Endothelial cell of umbilical vein (primary cell): ENCODE measurements at regions of chr19 and their contacts with region 1.

Region 1: GRCh38 chr19:2455851-2456570 is 748 bp downstream of the LMNB2 start:
- DNase-seq: no peak
- H3K4me3 ChIP-seq: peak overlapping the region; percentile 69 to 100 (median 80)
- H3K27ac ChIP-seq: peak overlapping the region; percentile 68
- H3K4me1 ChIP-seq: peaks cover 13% of the 10 kb centered on the region
- H3K27me3 ChIP-seq: no peaks in the 10 kb centered on the region
- CTCF ChIP-seq: no peak
- POLR2A ChIP-seq: no peak

Region 2: DNA sequence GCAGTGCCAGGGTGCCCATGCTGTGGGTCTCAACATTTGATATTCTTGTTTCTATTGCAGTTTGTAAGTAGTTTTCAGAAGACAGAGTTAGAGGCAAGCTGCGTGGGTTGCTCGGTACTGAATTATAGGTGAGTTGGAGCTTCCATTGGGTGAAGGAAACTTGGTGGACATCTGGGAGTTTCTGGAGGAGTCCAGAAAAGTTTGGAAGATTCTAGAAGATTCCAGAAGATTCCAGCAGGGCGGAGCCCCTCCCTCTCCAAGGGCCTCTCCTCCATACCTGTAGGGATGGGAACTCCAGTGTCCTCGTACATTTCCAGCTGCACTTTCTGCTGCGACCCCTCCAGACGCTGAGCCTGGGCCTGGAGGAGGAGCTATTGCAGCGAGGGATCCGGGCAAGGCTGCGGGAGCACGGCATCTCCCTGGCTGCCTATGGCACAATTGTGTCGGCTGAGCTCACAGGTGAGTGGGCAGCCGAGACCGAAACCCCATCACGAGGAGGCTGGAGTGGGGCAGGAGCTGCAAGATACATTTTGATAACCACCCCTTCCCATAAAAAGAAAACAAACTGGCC is 57.2 kb before region 1 on chr19:
- CTCF ChIA-PET with region 1: no interaction called
- POLR2A ChIA-PET with region 1: no interaction called
- dilution Hi-C with region 1: no loop called
- intact Hi-C with region 1: no loop called
- DNase-seq: no peak
- H3K4me3 ChIP-seq: no peak overlapping the region
- H3K27ac ChIP-seq: no peak overlapping the region
- H3K4me1 ChIP-seq: no peaks in the 10 kb centered on the region
- H3K27me3 ChIP-seq: no peaks in the 10 kb centered on the region
- CTCF ChIP-seq: no peak
- POLR2A ChIP-seq: no peak

Region 3: GRCh38 chr19:2427429-2428320 is 28.3 kb before region 1 on chr19 and contains the start of gene TIMM13:
- CTCF ChIA-PET with region 1: interaction called, 3 read pairs
- POLR2A ChIA-PET with region 1: interaction called, 3 read pairs
- dilution Hi-C with region 1: no loop called
- intact Hi-C with region 1: loop called (anchors 1 kb)
- DNase-seq: peak; percentile 98
- H3K4me3 ChIP-seq: peak within 1 kb of the TSS; percentile 63 to 75 (median 63)
- H3K27ac ChIP-seq: peak within 1 kb of the TSS; percentile 84
- H3K4me1 ChIP-seq: peaks cover 26% of the 10 kb centered on the region
- H3K27me3 ChIP-seq: no peaks in the 10 kb centered on the region
- CTCF ChIP-seq: no peak
- POLR2A ChIP-seq: peak; percentile 49
- total RNA-seq, gene TIMM13: 148 and 160 TPM in 2 replicates